ENCODE measurements at regions of chr5 and their contacts with region 1.

Region 1: GRCh38 chr5:40679155-40679913 is 381 bp upstream of the PTGER4 start:
- DNase-seq: peak; percentile 86
- ATAC-seq: peak; percentile 89
- H3K4me3 ChIP-seq: peak overlapping the region; percentile 94
- H3K27ac ChIP-seq: peak overlapping the region; percentile 98
- H3K4me1 ChIP-seq: peaks cover 13% of the 10 kb centered on the region
- H3K27me3 ChIP-seq: no peaks in the 10 kb centered on the region
- CTCF ChIP-seq: no peak
- POLR2A ChIP-seq: peak; percentile 51
- RAD21 ChIP-seq: no peak

Region 2: GRCh38 chr5:39948867-39949468 is 730.4 kb before region 1 on chr5:
- CTCF ChIA-PET with region 1: no interaction called
- POLR2A ChIA-PET with region 1: no interaction called
- dilution Hi-C with region 1: no loop called
- in situ Hi-C with region 1: loop called (anchors 5 kb)
- intact Hi-C with region 1: no loop called
- DNase-seq: peak; percentile 76
- ATAC-seq: peak; percentile 77
- H3K4me3 ChIP-seq: no peak overlapping the region
- H3K27ac ChIP-seq: no peak overlapping the region
- H3K4me1 ChIP-seq: no peaks in the 10 kb centered on the region
- H3K27me3 ChIP-seq: no peaks in the 10 kb centered on the region
- CTCF ChIP-seq: peak; percentile 70
- POLR2A ChIP-seq: no peak
- RAD21 ChIP-seq: peak; percentile 78

Region 3: GRCh38 chr5:40386289-40386688 is 293.0 kb before region 1 on chr5:
- CTCF ChIA-PET with region 1: no interaction called
- POLR2A ChIA-PET with region 1: no interaction called
- dilution Hi-C with region 1: no loop called
- in situ Hi-C with region 1: no loop called
- intact Hi-C with region 1: loop called (anchors 2 kb)
- DNase-seq: peak; percentile 55
- ATAC-seq: peak; percentile 46
- H3K4me3 ChIP-seq: no peak overlapping the region
- H3K27ac ChIP-seq: no peak overlapping the region
- H3K4me1 ChIP-seq: peaks cover 9% of the 10 kb centered on the region
- H3K27me3 ChIP-seq: no peaks in the 10 kb centered on the region
- CTCF ChIP-seq: no peak
- POLR2A ChIP-seq: no peak
- RAD21 ChIP-seq: no peak

Region 4: GRCh38 chr5:40442346-40442745 is 237.0 kb before region 1 on chr5:
- CTCF ChIA-PET with region 1: no interaction called
- POLR2A ChIA-PET with region 1: no interaction called
- dilution Hi-C with region 1: no loop called
- in situ Hi-C with region 1: no loop called
- intact Hi-C with region 1: loop called (anchors 5 kb)
- DNase-seq: peak; percentile 83
- ATAC-seq: peak; percentile 65
- H3K4me3 ChIP-seq: no peak overlapping the region
- H3K27ac ChIP-seq: no peak overlapping the region
- H3K4me1 ChIP-seq: peaks cover 3% of the 10 kb centered on the region; the same call in 1 of the 2 replicates
- H3K27me3 ChIP-seq: no peaks in the 10 kb centered on the region
- CTCF ChIP-seq: no peak
- POLR2A ChIP-seq: no peak
- RAD21 ChIP-seq: no peak

Region 5: GRCh38 chr5:40551496-40552491 is 127.5 kb before region 1 on chr5:
- CTCF ChIA-PET with region 1: no interaction called
- POLR2A ChIA-PET with region 1: no interaction called
- dilution Hi-C with region 1: no loop called
- in situ Hi-C with region 1: no loop called
- intact Hi-C with region 1: loop called (anchors 2 kb)
- DNase-seq: peak; percentile 98
- ATAC-seq: peak; percentile 94
- H3K4me3 ChIP-seq: no peak overlapping the region
- H3K27ac ChIP-seq: peak overlapping the region; percentile 99
- H3K4me1 ChIP-seq: peaks cover 12% of the 10 kb centered on the region
- H3K27me3 ChIP-seq: no peaks in the 10 kb centered on the region
- CTCF ChIP-seq: no peak
- POLR2A ChIP-seq: no peak
- RAD21 ChIP-seq: 0 out of 2 replicates have a peak, but pooled peaks have one; percentile 2